H1 (cell line): ENCODE measurements at regions of chr11 and their contacts with region 1.

Region 1: DNA sequence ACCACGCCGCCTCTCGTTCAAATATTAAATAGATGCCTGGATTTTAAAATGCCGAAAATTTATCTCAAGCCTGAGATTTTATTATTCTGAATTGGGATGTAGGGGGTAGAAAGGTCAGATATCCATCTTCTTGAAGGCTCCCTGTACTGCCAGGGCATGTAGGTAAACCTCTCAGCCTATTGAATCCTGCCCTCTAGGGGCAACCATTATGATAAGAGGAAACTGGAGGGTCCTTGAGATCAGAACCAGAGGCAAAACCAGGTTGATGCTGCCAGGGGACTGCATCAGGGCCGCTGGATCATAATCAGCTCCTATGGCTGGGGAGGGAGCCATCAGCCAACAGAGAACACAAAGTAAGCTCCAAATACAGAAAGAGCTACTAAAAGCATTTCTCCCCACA is 92.4 kb downstream of the KCNC1 start:
- DNase-seq: no peak
- H3K4me3 ChIP-seq: no peak overlapping the region
- H3K27ac ChIP-seq: no peak overlapping the region
- H3K4me1 ChIP-seq: 0 out of 7 replicates have a peak, but pooled peaks cover 0 to 2% (median 0%) of the 10 kb centered on the region in 4 experiments
- H3K27me3 ChIP-seq: no peaks in the 10 kb centered on the region
- CTCF ChIP-seq: peak in 2 of 3 experiments; percentile 64 to 72; a peak in 3 of 4 replicates
- EP300 ChIP-seq: no peak
- POLR2A ChIP-seq: no peak
- RAD21 ChIP-seq: peak; percentile 72 to 84

Region 2: GRCh38 chr11:17314904-17315426 is 512.0 kb before region 1 on chr11:
- CTCF ChIA-PET with region 1: no interaction called
- POLR2A ChIA-PET with region 1: no interaction called
- DNase-seq: no peak
- H3K4me3 ChIP-seq: no peak overlapping the region
- H3K27ac ChIP-seq: no peak overlapping the region
- H3K4me1 ChIP-seq: no peaks in the 10 kb centered on the region
- H3K27me3 ChIP-seq: no peaks in the 10 kb centered on the region
- CTCF ChIP-seq: no peak
- EP300 ChIP-seq: no peak
- POLR2A ChIP-seq: no peak
- RAD21 ChIP-seq: no peak

Region 3: DNA sequence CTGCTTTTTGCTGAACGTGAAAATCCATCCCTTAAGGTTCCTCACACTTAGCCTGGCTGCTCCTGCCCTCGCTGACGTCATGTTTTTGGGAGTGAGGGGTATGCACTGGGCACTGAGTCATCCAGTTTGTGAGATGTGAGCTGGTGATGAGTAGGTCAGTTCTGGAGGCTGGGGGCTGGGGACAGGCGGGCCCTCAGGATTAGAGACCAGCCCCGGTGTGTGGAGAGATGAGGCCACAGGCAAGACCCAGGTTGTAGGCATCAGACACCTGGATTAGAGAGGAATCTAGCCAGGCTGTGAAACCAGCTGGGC is 83.2 kb before region 1 on chr11:
- CTCF ChIA-PET with region 1: interaction called, 10 read pairs
- POLR2A ChIA-PET with region 1: no interaction called
- DNase-seq: no peak
- H3K4me3 ChIP-seq: no peak overlapping the region
- H3K27ac ChIP-seq: no peak overlapping the region
- H3K4me1 ChIP-seq: peaks cover 0 to 7% (median 3%) of the 10 kb centered on the region in 4 experiments; a peak in 6 of 7 replicates
- H3K27me3 ChIP-seq: peaks cover 0 to 6% (median 2%) of the 10 kb centered on the region in 4 experiments; a peak in 5 of 7 replicates
- CTCF ChIP-seq: no peak
- EP300 ChIP-seq: no peak
- POLR2A ChIP-seq: no peak
- RAD21 ChIP-seq: no peak

Region 4: DNA sequence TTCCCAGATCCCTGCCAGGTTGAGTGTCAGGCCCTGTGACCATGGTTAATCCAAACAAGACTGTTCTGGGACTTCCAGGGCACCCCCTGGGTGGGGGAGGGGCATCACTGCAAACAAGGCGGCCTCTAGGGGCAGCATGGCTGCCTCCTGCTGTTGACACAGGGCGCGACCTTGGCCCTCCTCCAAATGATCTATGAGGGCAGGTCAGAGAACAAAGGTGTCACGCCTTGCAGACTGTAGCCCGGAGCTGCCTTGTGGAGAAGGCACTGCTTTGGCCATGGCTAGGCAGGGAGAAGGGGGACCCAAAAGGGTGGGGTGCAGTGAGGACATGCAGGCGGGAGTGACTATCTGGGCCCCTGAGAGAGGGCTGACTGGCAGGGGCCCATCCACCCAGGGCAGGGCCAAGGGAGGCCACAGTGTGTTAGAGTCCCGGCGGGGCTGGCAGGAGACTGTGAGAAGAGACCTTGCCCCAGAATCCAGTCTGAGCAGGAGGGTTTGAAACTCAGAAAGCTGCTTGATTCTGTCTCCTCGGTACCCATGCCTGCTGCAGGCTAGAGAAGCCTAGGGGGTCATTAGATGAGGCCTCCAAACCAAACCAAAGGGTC is 56.9 kb before region 1 on chr11:
- CTCF ChIA-PET with region 1: interaction called, 28 read pairs
- POLR2A ChIA-PET with region 1: no interaction called
- DNase-seq: no peak
- H3K4me3 ChIP-seq: no peak overlapping the region
- H3K27ac ChIP-seq: no peak overlapping the region
- H3K4me1 ChIP-seq: peaks cover 0 to 4% (median 0%) of the 10 kb centered on the region in 4 experiments; a peak in 2 of 7 replicates
- H3K27me3 ChIP-seq: no peaks in the 10 kb centered on the region
- CTCF ChIP-seq: peak; percentile 34 to 44 (median 43)
- EP300 ChIP-seq: no peak
- POLR2A ChIP-seq: no peak
- RAD21 ChIP-seq: peak; percentile 10 to 25; a peak in 1 of 4 replicates

Region 5: GRCh38 chr11:17792161-17792560 is 34.8 kb before region 1 on chr11:
- CTCF ChIA-PET with region 1: interaction called, 14 read pairs
- POLR2A ChIA-PET with region 1: no interaction called
- DNase-seq: no peak
- H3K4me3 ChIP-seq: no peak overlapping the region
- H3K27ac ChIP-seq: no peak overlapping the region
- H3K4me1 ChIP-seq: no peaks in the 10 kb centered on the region
- H3K27me3 ChIP-seq: no peaks in the 10 kb centered on the region
- CTCF ChIP-seq: no peak
- EP300 ChIP-seq: no peak
- POLR2A ChIP-seq: no peak
- RAD21 ChIP-seq: no peak

Region 6: GRCh38 chr11:17839973-17840611 is 13.1 kb after region 1 on chr11:
- CTCF ChIA-PET with region 1: interaction called, 23 read pairs
- POLR2A ChIA-PET with region 1: no interaction called
- DNase-seq: no peak
- H3K4me3 ChIP-seq: no peak overlapping the region
- H3K27ac ChIP-seq: no peak overlapping the region
- H3K4me1 ChIP-seq: no peaks in the 10 kb centered on the region
- H3K27me3 ChIP-seq: no peaks in the 10 kb centered on the region
- CTCF ChIP-seq: no peak
- EP300 ChIP-seq: no peak
- POLR2A ChIP-seq: no peak
- RAD21 ChIP-seq: no peak

Region 7: DNA sequence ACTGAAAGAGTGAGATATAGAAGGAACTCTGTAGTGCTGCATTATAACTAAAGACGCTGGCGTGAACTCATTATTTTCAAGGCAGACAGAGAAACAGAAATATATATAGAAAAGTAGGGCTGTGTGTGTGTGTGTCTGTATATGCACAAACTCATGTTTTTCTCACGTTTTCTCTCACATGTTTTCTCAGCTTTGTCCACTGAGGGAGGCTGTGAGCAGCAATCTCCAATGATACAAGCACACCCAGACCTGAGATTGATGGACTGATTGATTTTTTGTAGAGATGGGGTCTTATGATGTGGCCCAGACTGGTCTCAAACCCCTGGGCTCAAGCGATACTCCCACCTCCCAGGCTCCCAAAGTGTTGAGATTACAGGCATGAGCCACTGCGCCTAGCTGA is 63.3 kb after region 1 on chr11:
- CTCF ChIA-PET with region 1: interaction called, 10 read pairs
- POLR2A ChIA-PET with region 1: no interaction called
- DNase-seq: no peak
- H3K4me3 ChIP-seq: no peak overlapping the region
- H3K27ac ChIP-seq: no peak overlapping the region
- H3K4me1 ChIP-seq: peaks cover 2 to 12% (median 3%) of the 10 kb centered on the region in 4 experiments; a peak in 3 of 7 replicates
- H3K27me3 ChIP-seq: no peaks in the 10 kb centered on the region
- CTCF ChIP-seq: peak in 1 of 3 experiments; percentile 31; a peak in 1 of 4 replicates
- EP300 ChIP-seq: no peak
- POLR2A ChIP-seq: no peak
- RAD21 ChIP-seq: peak; percentile 12 to 26; a peak in 2 of 4 replicates

Region 8: DNA sequence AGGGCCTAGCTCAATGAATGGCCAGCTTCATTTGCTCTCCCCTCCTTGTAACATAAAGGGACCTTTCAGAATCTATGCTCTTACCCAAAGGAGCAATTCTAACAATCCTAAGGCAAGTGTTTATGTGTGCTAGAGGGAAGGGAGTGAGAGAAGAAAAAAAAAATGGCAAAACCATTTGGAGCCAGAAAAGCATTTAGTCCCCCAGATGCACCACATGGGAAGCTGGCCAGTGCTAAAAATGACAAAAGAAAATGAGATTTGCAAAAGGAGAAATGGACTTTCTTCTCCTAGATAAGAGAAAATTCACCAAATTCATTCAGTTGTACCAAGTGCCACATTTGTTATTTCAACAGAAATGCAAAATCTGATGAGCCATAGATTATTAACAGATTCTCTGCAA is 133.1 kb after region 1 on chr11:
- CTCF ChIA-PET with region 1: no interaction called
- POLR2A ChIA-PET with region 1: no interaction called
- DNase-seq: no peak
- H3K4me3 ChIP-seq: no peak overlapping the region
- H3K27ac ChIP-seq: no peak overlapping the region
- H3K4me1 ChIP-seq: no peaks in the 10 kb centered on the region
- H3K27me3 ChIP-seq: no peaks in the 10 kb centered on the region
- CTCF ChIP-seq: no peak
- EP300 ChIP-seq: no peak
- POLR2A ChIP-seq: no peak
- RAD21 ChIP-seq: no peak